ENCODE measurements at regions of chr15 and their contacts with region 1.

Region 1: GRCh38 chr15:85005319-85005718 is 23.7 kb downstream of the PDE8A start:
- DNase-seq: no peak
- ATAC-seq: no peak
- H3K4me3 ChIP-seq: no peak overlapping the region
- H3K27ac ChIP-seq: no peak overlapping the region
- H3K4me1 ChIP-seq: peaks cover 47% of the 10 kb centered on the region
- H3K27me3 ChIP-seq: no peaks in the 10 kb centered on the region
- CTCF ChIP-seq: no peak
- EP300 ChIP-seq: no peak
- POLR2A ChIP-seq: no peak
- RAD21 ChIP-seq: no peak

Region 2: GRCh38 chr15:85030301-85031049 is 25.2 kb after region 1 on chr15:
- CTCF ChIA-PET with region 1: interaction called, 8 read pairs
- POLR2A ChIA-PET with region 1: interaction called, 8 read pairs
- RAD21 ChIA-PET with region 1: interaction called, 21 read pairs
- SMC1A ChIA-PET with region 1: interaction called, 21 read pairs
- in situ Hi-C with region 1: no loop called
- intact Hi-C with region 1: no loop called
- DNase-seq: no peak
- ATAC-seq: peak; percentile 60
- H3K4me3 ChIP-seq: no peak overlapping the region
- H3K27ac ChIP-seq: peak overlapping the region; percentile 29
- H3K4me1 ChIP-seq: peaks cover 25% of the 10 kb centered on the region
- H3K27me3 ChIP-seq: no peaks in the 10 kb centered on the region
- CTCF ChIP-seq: no peak
- EP300 ChIP-seq: no peak
- POLR2A ChIP-seq: no peak
- RAD21 ChIP-seq: no peak

Measured in GM12878 (cell line).